BJ (cell line): ENCODE measurements at regions of chr17 and their contacts with region 1.

Region 1: DNA sequence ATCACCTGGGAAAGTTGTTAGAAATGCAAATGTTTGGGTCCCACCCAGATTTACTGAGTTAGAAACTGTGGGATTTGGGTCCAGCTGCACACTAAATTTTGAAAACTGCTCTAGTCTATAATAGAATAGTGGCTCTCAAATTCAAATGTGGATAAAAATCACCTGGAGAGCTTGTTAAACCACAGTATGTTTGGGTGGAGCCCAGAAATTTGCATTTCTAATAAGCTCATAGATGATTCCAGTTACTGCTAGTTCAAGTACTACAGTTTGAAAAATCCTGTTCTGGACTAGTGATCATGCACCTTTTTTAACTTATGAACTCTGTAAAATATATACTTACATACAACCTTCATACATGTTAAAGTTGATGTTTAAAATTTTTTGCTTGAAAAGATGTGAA is 27.8 kb downstream of the RABEP1 start:
- DNase-seq: no peak
- H3K4me3 ChIP-seq: no peak overlapping the region
- H3K27me3 ChIP-seq: no peaks in the 10 kb centered on the region
- CTCF ChIP-seq: no peak

Region 2: DNA sequence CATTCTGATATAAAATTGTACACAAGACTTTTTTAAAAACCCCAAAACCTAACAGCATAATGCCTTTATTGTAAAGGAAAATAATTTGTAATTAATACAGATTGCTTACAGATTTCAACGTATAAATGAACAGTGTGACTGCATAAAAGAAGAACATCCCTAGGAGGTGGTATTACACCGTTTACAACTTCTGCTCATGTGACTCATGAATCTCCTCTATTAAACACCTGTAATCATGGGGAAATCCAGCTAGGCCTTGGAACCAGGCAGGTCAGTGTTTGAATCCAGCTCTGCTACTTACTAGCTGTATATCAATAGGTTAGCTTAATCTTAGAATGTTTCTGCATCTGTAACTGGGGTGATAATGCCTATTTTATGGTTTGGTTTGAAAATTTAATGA is 12.6 kb before region 1 on chr17:
- CTCF ChIA-PET with region 1: interaction called, 26 read pairs
- POLR2A ChIA-PET with region 1: no interaction called
- DNase-seq: no peak
- H3K4me3 ChIP-seq: no peak overlapping the region
- H3K27me3 ChIP-seq: no peaks in the 10 kb centered on the region
- CTCF ChIP-seq: no peak